ENCODE measurements at regions of chr17 and their contacts with region 1.

Region 1: DNA sequence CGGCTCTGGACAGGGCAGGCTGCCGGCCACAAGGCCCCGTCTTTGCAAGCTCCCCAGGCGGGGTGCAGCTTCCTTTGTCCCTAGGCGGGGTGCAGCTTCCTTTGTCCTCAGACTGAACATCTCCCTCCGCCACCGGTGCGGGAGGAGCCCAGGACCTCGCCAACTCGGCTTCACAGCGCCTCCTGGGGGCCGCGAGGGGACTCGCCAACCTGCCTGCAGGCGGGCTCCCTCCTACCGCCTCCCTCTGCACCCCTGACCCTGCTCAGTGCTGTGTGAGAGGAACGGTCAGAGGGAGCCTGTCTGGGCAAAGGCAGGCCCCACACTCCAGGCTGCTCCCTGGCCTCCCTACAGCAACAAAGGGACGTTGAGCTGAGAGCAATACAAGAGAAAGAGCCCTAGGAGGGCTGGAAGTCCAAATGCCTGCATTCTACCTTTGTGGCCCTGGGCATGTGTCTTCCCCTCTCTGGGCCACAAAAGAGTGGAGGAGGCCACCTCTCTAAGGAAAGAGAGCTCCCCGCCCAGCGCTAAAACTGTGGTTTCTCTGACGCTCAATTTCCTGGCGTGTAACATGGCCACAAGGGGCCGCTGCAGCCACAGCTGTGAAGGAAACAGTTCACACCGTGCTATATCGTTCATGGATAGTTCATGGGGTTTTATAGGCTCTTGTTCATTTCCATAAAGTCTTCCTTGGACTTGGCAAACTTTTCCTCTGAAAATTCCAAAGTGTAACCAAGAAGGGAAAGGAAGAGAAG is 20.9 kb upstream of the KRT19 start:
- DNase-seq: peak; percentile 77
- H3K4me3 ChIP-seq: no peak overlapping the region
- H3K27ac ChIP-seq: peak overlapping the region; percentile 85
- H3K27me3 ChIP-seq: no peaks in the 10 kb centered on the region
- CTCF ChIP-seq: peak; percentile 86

Region 2: DNA sequence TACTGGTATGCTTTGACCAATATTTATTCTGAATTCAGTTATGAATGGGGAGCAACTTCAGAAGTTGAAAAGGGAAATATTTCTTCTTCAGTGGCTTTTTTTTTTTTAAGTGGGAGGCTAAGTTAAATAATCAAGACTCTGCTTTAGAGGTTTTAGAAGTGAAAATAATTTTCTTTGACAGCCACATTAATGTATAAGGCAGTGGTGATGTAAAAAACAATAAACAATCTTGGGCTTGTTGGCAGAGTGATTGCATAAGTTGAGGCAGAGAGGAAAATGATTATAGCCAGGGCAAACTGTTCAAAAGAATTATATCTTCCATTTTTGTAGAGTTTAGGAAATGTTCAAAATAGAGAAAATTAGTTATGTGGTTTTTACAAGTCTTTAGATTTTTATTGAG is 676.6 kb before region 1 on chr17:
- CTCF ChIA-PET with region 1: interaction called, 19 read pairs
- POLR2A ChIA-PET with region 1: no interaction called
- DNase-seq: no peak
- H3K4me3 ChIP-seq: no peak overlapping the region
- H3K27ac ChIP-seq: no peak overlapping the region
- H3K27me3 ChIP-seq: peaks cover 3% of the 10 kb centered on the region
- CTCF ChIP-seq: no peak

Region 3: DNA sequence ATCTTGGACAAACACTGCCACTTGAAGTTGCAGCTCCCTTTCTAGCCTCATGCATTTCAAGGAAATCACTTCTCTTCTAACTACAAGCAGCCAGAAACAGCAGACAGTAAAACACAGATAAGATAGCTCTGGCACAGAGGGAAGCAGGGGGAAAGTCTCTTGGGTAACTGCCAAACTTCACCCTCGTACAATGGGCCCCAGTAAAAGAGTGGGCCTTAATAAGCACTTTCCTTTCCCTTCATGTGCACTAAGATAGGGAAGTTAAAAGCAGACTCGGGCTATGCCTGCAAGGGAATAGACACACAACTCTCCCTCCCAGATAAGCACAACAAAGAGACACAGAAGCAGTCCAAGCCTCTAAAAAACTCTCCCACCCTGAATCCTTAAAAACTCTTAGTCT is 395.2 kb before region 1 on chr17:
- CTCF ChIA-PET with region 1: interaction called, 10 read pairs
- POLR2A ChIA-PET with region 1: no interaction called
- DNase-seq: no peak
- H3K4me3 ChIP-seq: no peak overlapping the region
- H3K27ac ChIP-seq: no peak overlapping the region
- H3K27me3 ChIP-seq: no peaks in the 10 kb centered on the region
- CTCF ChIP-seq: no peak

Region 4: GRCh38 chr17:41496820-41497408 is 52.1 kb before region 1 on chr17:
- CTCF ChIA-PET with region 1: interaction called, 35 read pairs
- POLR2A ChIA-PET with region 1: no interaction called
- DNase-seq: peak; percentile 55
- H3K4me3 ChIP-seq: no peak overlapping the region
- H3K27ac ChIP-seq: no peak overlapping the region
- H3K27me3 ChIP-seq: no peaks in the 10 kb centered on the region
- CTCF ChIP-seq: peak; percentile 78

Region 5: GRCh38 chr17:41532947-41533570 is 16.0 kb before region 1 on chr17:
- CTCF ChIA-PET with region 1: interaction called, 60 read pairs
- POLR2A ChIA-PET with region 1: no interaction called
- DNase-seq: no peak
- H3K4me3 ChIP-seq: no peak overlapping the region
- H3K27ac ChIP-seq: no peak overlapping the region
- H3K27me3 ChIP-seq: no peaks in the 10 kb centered on the region
- CTCF ChIP-seq: no peak

Region 6: GRCh38 chr17:41579484-41580243 is 30.6 kb after region 1 on chr17:
- CTCF ChIA-PET with region 1: interaction called, 12 read pairs
- POLR2A ChIA-PET with region 1: no interaction called
- DNase-seq: peak; percentile 6
- H3K4me3 ChIP-seq: no peak overlapping the region
- H3K27ac ChIP-seq: no peak overlapping the region
- H3K27me3 ChIP-seq: peaks cover 28% of the 10 kb centered on the region
- CTCF ChIP-seq: peak; percentile 76

Region 7: GRCh38 chr17:41688699-41689496 is 139.9 kb after region 1 on chr17 and contains the start of gene EIF1:
- CTCF ChIA-PET with region 1: interaction called, 4 read pairs
- POLR2A ChIA-PET with region 1: interaction called, 11 read pairs
- DNase-seq: peak; percentile 99
- H3K4me3 ChIP-seq: peak within 1 kb of the TSS; percentile 99
- H3K27ac ChIP-seq: peak within 1 kb of the TSS; percentile 100
- H3K27me3 ChIP-seq: peaks cover 4% of the 10 kb centered on the region
- CTCF ChIP-seq: no peak
- polyA plus RNA-seq, gene EIF1: 529 and 549 TPM in 2 replicates

Region 8: GRCh38 chr17:41754066-41754465 is 205.0 kb after region 1 on chr17:
- CTCF ChIA-PET with region 1: no interaction called
- POLR2A ChIA-PET with region 1: no interaction called
- DNase-seq: no peak
- H3K4me3 ChIP-seq: no peak overlapping the region
- H3K27ac ChIP-seq: no peak overlapping the region
- H3K27me3 ChIP-seq: no peaks in the 10 kb centered on the region
- CTCF ChIP-seq: no peak

Region 9: DNA sequence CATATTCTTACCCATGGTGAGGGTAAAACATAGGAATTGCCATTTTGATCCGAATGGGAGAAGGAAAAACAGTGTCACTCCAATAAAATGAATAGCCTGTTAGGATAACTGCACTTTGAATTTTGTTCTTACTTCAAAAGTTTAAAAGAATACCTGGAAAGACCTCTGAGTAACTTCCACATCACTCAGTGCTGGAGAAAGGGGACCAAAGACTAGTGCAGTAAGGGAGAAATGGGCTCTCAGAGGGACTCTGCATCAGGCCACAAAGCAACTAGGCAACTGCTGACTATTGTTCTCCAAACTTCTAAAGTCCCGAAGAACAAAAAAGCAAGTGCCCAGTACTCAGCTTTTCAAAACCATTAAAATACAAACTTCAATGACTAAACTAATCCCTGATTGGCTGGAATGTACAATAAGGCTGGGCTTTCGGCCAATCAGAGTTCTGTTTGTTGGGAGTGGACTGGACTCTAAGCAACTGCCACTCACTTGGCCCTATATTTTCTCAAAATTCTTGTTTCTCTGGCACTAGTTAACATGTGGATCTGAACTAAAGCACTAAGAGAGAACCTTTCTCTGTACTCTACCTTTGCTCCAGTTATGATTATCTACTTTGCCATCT is 462.0 kb after region 1 on chr17:
- CTCF ChIA-PET with region 1: no interaction called
- POLR2A ChIA-PET with region 1: no interaction called
- DNase-seq: no peak
- H3K4me3 ChIP-seq: no peak overlapping the region
- H3K27ac ChIP-seq: no peak overlapping the region
- H3K27me3 ChIP-seq: no peaks in the 10 kb centered on the region
- CTCF ChIP-seq: no peak

Measured in AG04450 (cell line).